ENCODE measurements at regions of chr19 and their contacts with region 1.

Region 1: DNA sequence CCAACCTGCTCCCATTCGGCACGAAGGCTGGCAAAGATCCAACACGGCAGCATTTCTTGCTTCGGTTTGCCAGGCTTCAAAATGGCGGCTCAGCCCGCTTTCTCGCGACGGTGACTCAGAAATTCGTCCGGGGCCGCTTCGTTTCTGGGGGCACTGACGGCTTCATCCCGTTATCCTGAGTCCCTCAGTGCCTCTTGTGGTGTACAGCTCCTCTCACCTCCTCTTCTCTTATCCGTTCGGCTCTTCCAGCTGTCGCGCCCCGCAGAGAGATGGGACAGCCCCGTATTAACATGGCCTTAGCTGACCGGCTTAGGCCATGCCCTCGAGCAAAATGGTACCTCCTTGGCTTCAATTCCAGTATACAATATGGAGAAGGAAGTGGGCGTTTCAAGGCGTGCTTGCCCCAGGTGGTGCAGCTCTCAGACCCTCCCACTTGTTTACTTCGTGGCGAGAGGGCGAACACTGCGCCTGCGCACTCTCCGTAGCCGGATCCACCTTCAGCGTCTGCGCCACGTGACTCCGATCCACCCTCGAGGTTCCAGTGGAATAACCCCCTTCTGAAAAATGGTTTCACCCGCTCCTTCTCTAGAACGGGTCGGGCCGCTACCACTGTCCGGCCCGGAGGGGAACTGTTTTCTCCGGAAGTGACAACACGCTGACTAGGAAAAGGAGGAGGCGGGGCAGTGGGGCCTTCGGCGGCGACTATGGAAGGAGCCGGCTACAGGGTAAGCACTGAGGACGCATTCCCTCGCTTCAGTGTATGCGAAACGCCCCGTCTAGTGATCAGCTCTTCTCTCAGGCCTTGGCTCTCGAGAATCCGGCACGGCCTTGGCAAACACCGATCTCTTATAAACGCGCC is at the starts of genes AKT1S1 and TBC1D17:
- DNase-seq: peak; percentile 100
- ATAC-seq: peak; percentile 65
- H3K4me3 ChIP-seq: peak within 1 kb of the TSS; percentile 85 to 96 (median 95)
- H3K4me3 Mint-ChIP-seq: no peak within 1 kb of the TSS
- H3K27ac ChIP-seq: peak within 1 kb of the TSS; percentile 94 to 98
- H3K27ac Mint-ChIP-seq: no peak within 1 kb of the TSS
- H3K4me1 ChIP-seq: peaks cover 12 to 20% of the 10 kb centered on the region in 2 donors
- H3K4me1 Mint-ChIP-seq: peaks cover 21% of the 10 kb centered on the region
- H3K27me3 ChIP-seq: no peaks in the 10 kb centered on the region
- H3K27me3 Mint-ChIP-seq: no peaks in the 10 kb centered on the region
- CTCF ChIP-seq: no peak
- total RNA-seq, gene AKT1S1: 23.0 and 25.2 TPM in 2 replicates
- total RNA-seq, gene TBC1D17: 94.3 and 98.7 TPM in 2 replicates

Region 2: GRCh38 chr19:49085020-49085867 is 792.0 kb before region 1 on chr19 and contains the start of gene SNRNP70:
- CTCF ChIA-PET with region 1: no interaction called
- POLR2A ChIA-PET with region 1: no interaction called
- intact Hi-C with region 1: loop called (anchors 2 kb)
- DNase-seq: peak; percentile 100
- ATAC-seq: peak; percentile 95
- H3K4me3 ChIP-seq: peak within 1 kb of the TSS; percentile 74 to 89 (median 82)
- H3K4me3 Mint-ChIP-seq: peak within 1 kb of the TSS; percentile 93
- H3K27ac ChIP-seq: peak within 1 kb of the TSS; percentile 66 to 90
- H3K27ac Mint-ChIP-seq: peak within 1 kb of the TSS; percentile 87
- H3K4me1 ChIP-seq: peaks cover 20 to 28% of the 10 kb centered on the region in 2 donors
- H3K4me1 Mint-ChIP-seq: peaks cover 33% of the 10 kb centered on the region
- H3K27me3 ChIP-seq: peaks cover 0 to 3% (median 0%) of the 10 kb centered on the region in 4 experiments
- H3K27me3 Mint-ChIP-seq: peaks cover 5% of the 10 kb centered on the region
- CTCF ChIP-seq: no peak
- total RNA-seq, gene SNRNP70: 598 and 610 TPM in 2 replicates

Region 3: GRCh38 chr19:49640113-49640898 is 236.9 kb before region 1 on chr19 and contains the start of gene RRAS:
- CTCF ChIA-PET with region 1: no interaction called
- POLR2A ChIA-PET with region 1: interaction called, 3 read pairs
- intact Hi-C with region 1: loop called (anchors 1 kb)
- DNase-seq: peak; percentile 100
- ATAC-seq: peak; percentile 69
- H3K4me3 ChIP-seq: peak within 1 kb of the TSS; percentile 35 to 97 (median 80)
- H3K4me3 Mint-ChIP-seq: peak within 1 kb of the TSS; percentile 95
- H3K27ac ChIP-seq: peak within 1 kb of the TSS; percentile 91 to 96
- H3K27ac Mint-ChIP-seq: peak within 1 kb of the TSS; percentile 95
- H3K4me1 ChIP-seq: peaks cover 37 to 55% of the 10 kb centered on the region in 2 donors
- H3K4me1 Mint-ChIP-seq: peaks cover 53% of the 10 kb centered on the region
- H3K27me3 ChIP-seq: no peaks in the 10 kb centered on the region
- H3K27me3 Mint-ChIP-seq: no peaks in the 10 kb centered on the region
- CTCF ChIP-seq: no peak
- total RNA-seq, gene RRAS: 5.6 and 6.3 TPM in 2 replicates

Region 4: GRCh38 chr19:49843265-49843664 is 34.0 kb before region 1 on chr19:
- CTCF ChIA-PET with region 1: no interaction called
- POLR2A ChIA-PET with region 1: interaction called, 23 read pairs
- intact Hi-C with region 1: no loop called
- DNase-seq: peak; percentile 83
- ATAC-seq: peak; percentile 99
- H3K4me3 ChIP-seq: peak overlapping the region in 3 of 5 experiments; percentile 17 to 52 (median 39)
- H3K4me3 Mint-ChIP-seq: peak overlapping the region; percentile 58
- H3K27ac ChIP-seq: peak overlapping the region; percentile 74 to 84
- H3K27ac Mint-ChIP-seq: peak overlapping the region; percentile 84
- H3K4me1 ChIP-seq: peaks cover 37 to 51% of the 10 kb centered on the region in 2 donors
- H3K4me1 Mint-ChIP-seq: peaks cover 47% of the 10 kb centered on the region
- H3K27me3 ChIP-seq: no peaks in the 10 kb centered on the region
- H3K27me3 Mint-ChIP-seq: no peaks in the 10 kb centered on the region
- CTCF ChIP-seq: no peak

Region 5: DNA sequence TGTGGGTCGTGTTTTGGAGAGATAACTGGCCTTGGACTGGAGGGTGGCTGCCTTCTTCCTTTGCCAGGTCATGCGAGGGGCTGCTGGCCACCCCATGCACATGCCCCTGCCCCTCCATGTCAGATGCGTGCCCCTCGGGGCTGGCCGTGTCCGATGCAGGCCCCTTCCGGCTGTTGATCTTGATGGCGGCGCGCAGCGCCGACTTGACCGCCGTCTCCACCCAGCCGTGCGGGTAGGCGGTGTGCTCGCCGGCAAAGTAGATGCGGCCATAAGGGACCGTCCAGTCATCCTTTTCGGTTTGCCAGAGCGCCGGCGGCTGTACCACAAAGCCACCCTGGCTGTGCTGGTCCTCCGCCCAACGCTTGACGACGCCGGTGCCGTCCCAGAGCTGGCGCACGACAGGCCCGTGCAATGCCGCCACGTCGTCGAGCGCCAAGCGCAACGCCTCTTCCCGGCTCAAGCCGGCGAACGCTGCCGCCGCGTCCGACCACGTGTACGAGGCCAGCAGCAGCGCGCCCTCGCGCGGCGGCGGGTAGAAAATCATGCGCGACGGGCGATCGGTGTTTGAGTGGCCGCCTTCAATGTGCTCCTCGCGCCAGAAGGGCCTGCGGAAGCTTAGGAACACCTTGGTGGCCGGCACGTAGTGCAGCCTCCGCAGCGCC is 12.6 kb after region 1 on chr19:
- CTCF ChIA-PET with region 1: interaction called, 5 read pairs
- POLR2A ChIA-PET with region 1: interaction called, 10 read pairs
- intact Hi-C with region 1: loop called (anchors 1 kb)
- DNase-seq: peak; percentile 88
- ATAC-seq: peak; percentile 68
- H3K4me3 ChIP-seq: peak overlapping the region in 4 of 5 experiments; percentile 41 to 62 (median 50)
- H3K4me3 Mint-ChIP-seq: peak overlapping the region; percentile 86
- H3K27ac ChIP-seq: no peak overlapping the region
- H3K27ac Mint-ChIP-seq: peak overlapping the region; percentile 67
- H3K4me1 ChIP-seq: peaks cover 3 to 17% of the 10 kb centered on the region in 2 donors
- H3K4me1 Mint-ChIP-seq: peaks cover 27% of the 10 kb centered on the region
- H3K27me3 ChIP-seq: no peaks in the 10 kb centered on the region
- H3K27me3 Mint-ChIP-seq: no peaks in the 10 kb centered on the region
- CTCF ChIP-seq: peak; percentile 89

Region 6: GRCh38 chr19:49929611-49930482 is 52.6 kb after region 1 on chr19:
- CTCF ChIA-PET with region 1: interaction called, 3 read pairs
- POLR2A ChIA-PET with region 1: interaction called, 17 read pairs
- intact Hi-C with region 1: loop called (anchors 1 kb)
- DNase-seq: peak; percentile 99
- ATAC-seq: peak; percentile 84
- H3K4me3 ChIP-seq: peak overlapping the region; percentile 70 to 98 (median 89)
- H3K4me3 Mint-ChIP-seq: peak overlapping the region; percentile 100
- H3K27ac ChIP-seq: peak overlapping the region; percentile 80 to 97
- H3K27ac Mint-ChIP-seq: peak overlapping the region; percentile 98
- H3K4me1 ChIP-seq: peaks cover 20 to 32% of the 10 kb centered on the region in 2 donors
- H3K4me1 Mint-ChIP-seq: peaks cover 53% of the 10 kb centered on the region
- H3K27me3 ChIP-seq: no peaks in the 10 kb centered on the region
- H3K27me3 Mint-ChIP-seq: no peaks in the 10 kb centered on the region
- CTCF ChIP-seq: no peak

Region 7: GRCh38 chr19:50030225-50030624 is 153.0 kb after region 1 on chr19:
- CTCF ChIA-PET with region 1: no interaction called
- POLR2A ChIA-PET with region 1: no interaction called
- intact Hi-C with region 1: no loop called
- DNase-seq: no peak
- ATAC-seq: no peak
- H3K4me3 ChIP-seq: no peak overlapping the region
- H3K4me3 Mint-ChIP-seq: no peak overlapping the region
- H3K27ac ChIP-seq: no peak overlapping the region
- H3K27ac Mint-ChIP-seq: no peak overlapping the region
- H3K4me1 ChIP-seq: peaks cover 8 to 18% of the 10 kb centered on the region in 2 donors
- H3K4me1 Mint-ChIP-seq: peaks cover 18% of the 10 kb centered on the region
- H3K27me3 ChIP-seq: no peaks in the 10 kb centered on the region
- H3K27me3 Mint-ChIP-seq: no peaks in the 10 kb centered on the region
- CTCF ChIP-seq: no peak